ENCODE measurements at regions of chr9 and their contacts with region 1.

Region 1: DNA sequence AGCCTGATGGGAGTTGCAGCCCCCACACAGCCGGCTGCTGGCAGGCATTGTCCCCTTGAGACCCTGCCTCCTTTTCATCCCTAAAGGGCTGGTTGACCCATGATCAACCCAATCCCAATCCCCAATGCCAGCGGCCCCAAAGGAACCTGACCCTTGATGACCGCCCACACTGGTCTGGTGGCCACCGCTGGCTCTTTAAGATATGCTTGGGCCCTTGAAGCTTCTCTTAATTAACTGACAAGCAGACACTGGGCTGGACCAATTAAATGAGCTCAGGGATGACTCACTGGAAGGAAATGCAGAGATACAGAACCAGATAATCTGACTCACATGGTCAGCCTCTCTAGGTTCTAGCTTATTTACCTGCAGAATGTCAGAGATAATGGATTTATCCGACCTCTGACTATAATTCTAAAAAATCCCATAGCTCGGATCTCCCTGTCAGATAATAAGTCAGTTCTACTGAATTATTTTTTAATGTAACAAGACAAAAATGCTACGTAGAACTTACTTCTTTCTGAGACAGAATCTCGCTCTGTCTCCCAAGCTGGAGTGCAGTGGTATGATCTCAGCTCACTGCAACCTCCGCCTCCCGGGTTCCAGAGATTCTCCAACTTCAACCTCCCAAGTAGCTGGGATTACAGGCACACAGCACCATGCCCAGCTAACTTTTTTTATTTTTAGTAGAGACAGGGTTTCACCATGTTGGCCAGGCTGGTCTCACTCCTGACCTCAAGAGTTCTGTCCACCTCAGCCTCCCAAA is 11.1 kb upstream of the MLANA start:
- DNase-seq: peak; percentile 85
- H3K4me3 Mint-ChIP-seq: peak overlapping the region; percentile 58
- H3K27ac Mint-ChIP-seq: peak overlapping the region; percentile 80
- H3K4me1 Mint-ChIP-seq: peaks cover 9% of the 10 kb centered on the region
- H3K27me3 Mint-ChIP-seq: no peaks in the 10 kb centered on the region
- CTCF ChIP-seq: no peak

Region 2: DNA sequence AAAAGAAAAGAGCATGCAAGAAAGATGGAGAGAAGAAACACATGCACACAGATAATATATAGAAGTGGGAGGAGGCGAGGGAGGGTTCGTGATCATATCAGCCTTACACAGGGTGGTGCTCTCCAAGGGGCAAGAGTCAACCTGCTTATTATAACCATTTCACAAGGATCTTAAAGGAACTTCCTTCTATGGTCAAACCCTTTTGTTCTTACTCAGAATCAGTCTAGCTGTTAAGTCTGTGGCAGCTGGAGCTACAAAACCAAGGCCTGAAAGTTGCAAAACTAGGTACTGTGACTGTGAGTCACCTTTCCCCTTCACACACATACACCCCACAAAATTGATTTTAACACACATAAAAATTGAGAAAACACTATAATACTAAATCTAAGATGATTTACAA is 28.2 kb before region 1 on chr9:
- CTCF ChIA-PET with region 1: interaction called, 4 read pairs
- POLR2A ChIA-PET with region 1: interaction called, 24 read pairs
- intact Hi-C with region 1: no loop called
- DNase-seq: peak; percentile 93
- H3K4me3 Mint-ChIP-seq: no peak overlapping the region
- H3K27ac Mint-ChIP-seq: peak overlapping the region; percentile 88
- H3K4me1 Mint-ChIP-seq: peaks cover 15% of the 10 kb centered on the region
- H3K27me3 Mint-ChIP-seq: no peaks in the 10 kb centered on the region
- CTCF ChIP-seq: no peak

Region 3: DNA sequence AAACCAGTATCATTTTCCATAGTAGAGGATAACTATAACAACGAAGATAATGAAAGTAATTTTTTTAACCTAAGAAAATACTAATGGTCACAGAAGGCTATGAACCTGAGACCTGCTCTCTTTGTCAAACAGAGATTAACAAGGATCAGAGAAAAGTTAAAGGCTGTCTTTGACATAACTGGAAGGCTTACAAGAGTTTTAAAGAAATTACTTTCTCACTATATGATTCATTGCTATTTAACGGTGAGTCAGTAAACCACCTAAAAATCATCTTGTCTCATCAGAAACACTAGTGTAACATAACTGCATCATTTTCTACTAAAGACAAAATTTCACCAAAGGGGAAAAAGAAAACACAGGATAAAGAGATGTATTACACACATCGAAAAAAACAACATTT is 30.4 kb after region 1 on chr9:
- CTCF ChIA-PET with region 1: no interaction called
- POLR2A ChIA-PET with region 1: no interaction called
- intact Hi-C with region 1: no loop called
- DNase-seq: peak; percentile 8
- H3K4me3 Mint-ChIP-seq: no peak overlapping the region
- H3K27ac Mint-ChIP-seq: peak overlapping the region; percentile 46
- H3K4me1 Mint-ChIP-seq: peaks cover 17% of the 10 kb centered on the region
- H3K27me3 Mint-ChIP-seq: no peaks in the 10 kb centered on the region
- CTCF ChIP-seq: no peak